Activated CD4-positive, alpha-beta memory T cell treated with anti-CD3 and anti-CD28 coated beads for 36 hours (primary cell): ENCODE measurements at regions of chrX and their contacts with region 1.

Region 1: GRCh38 chrX:101287402-101287801 is 3.7 kb downstream of the TAF7L start:
- DNase-seq: no peak
- H3K4me3 Mint-ChIP-seq: no peak overlapping the region
- H3K27ac Mint-ChIP-seq: no peak overlapping the region
- H3K4me1 Mint-ChIP-seq: no peaks in the 10 kb centered on the region
- H3K27me3 Mint-ChIP-seq: peaks cover 2% of the 10 kb centered on the region

Region 2: DNA sequence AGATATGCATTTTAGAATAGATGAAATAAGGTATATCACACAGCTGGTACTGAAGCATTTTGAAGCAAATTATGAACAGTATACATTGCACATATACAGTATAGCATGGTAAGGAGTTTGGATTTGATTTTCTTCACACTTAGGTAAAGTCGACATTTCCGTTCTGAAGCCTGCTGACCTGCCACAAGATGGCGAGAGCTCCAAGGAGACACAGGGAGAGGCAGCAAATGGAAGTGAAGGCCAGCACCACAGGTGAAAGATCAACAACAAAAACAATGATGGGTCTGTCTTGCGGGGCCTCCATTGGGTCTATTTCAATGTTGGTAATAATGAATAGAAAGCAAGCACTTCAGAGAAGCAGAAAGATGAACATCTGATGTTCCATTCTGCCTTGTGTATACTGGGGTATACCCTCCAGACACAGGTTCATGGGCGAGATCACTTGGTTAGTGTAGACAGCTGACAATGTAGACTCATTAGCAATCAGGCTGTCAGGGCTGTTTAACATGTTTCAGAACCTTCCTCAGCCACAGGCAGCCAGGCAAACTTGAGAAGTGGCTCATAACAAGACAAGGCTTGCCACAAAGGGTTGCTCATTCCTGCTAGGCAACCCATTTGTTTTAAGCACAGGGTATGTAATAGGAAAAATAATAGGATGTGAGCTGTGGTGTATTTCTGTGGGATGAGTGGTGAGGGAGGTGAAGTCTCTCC is 391.9 kb before region 1 on chrX:
- CTCF ChIA-PET with region 1: interaction called, 3 read pairs
- POLR2A ChIA-PET with region 1: no interaction called
- intact Hi-C with region 1: loop called (anchors 2 kb)
- DNase-seq: peak; percentile 32
- H3K4me3 Mint-ChIP-seq: no peak overlapping the region
- H3K27ac Mint-ChIP-seq: no peak overlapping the region
- H3K4me1 Mint-ChIP-seq: no peaks in the 10 kb centered on the region
- H3K27me3 Mint-ChIP-seq: no peaks in the 10 kb centered on the region